HEK293 (cell line): ENCODE measurements at regions of chr6 and their contacts with region 1.

Region 1: GRCh38 chr6:116531675-116532570 is 13.6 kb downstream of the TRAPPC3L start:
- H3K4me3 ChIP-seq: no peak overlapping the region
- H3K27ac ChIP-seq: no peak overlapping the region
- H3K4me1 ChIP-seq: peaks cover 28% of the 10 kb centered on the region
- CTCF ChIP-seq: 0 out of 2 replicates have a peak, but pooled peaks have one; percentile 36

Region 2: DNA sequence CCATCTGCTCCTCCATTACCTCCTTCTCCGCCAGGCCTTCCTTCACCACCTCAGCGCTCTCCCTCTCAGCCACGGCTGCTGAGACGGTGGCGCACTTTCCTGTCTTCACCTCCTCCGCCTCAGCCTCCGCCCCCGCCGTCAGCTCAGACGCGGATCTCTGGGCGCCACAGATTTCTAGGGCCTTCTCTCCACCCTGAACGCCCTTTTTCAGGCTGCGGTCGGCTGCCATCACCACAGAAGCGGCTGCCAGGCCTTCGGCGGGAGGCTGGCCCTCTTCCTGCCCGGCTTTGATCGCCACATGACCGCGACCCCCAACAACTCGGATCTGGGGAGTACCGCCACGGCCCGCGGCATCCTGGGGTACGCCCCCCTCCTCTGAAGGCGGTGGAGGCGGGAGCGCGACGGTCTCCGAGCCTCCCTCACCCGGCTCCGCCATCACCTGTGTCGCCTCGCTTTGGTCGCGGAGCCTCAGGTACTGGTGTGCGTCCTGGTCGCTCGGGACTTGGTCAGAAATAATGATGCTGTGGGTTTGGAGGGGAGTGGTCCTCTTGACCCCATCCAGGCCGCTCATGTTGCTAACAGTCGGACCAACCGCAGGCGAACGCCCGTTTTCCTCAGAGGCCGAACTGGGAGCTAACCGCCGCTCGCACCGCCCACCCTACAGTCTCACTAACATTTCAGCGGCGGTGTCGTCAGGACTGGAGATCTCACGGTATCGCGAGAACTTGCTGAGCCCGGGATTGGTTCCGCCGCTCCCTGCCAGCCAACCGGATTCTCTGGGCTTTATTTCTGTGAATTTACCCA is 252.5 kb before region 1 on chr6 and contains the start of gene TSPYL1:
- CTCF ChIA-PET with region 1: interaction called, 12 read pairs
- POLR2A ChIA-PET with region 1: interaction called, 6 read pairs
- H3K4me3 ChIP-seq: peak within 1 kb of the TSS; percentile 97
- H3K27ac ChIP-seq: peak within 1 kb of the TSS; percentile 94
- H3K4me1 ChIP-seq: peaks cover 4% of the 10 kb centered on the region; the same call in 1 of the 2 replicates
- CTCF ChIP-seq: peak; percentile 87

Region 3: DNA sequence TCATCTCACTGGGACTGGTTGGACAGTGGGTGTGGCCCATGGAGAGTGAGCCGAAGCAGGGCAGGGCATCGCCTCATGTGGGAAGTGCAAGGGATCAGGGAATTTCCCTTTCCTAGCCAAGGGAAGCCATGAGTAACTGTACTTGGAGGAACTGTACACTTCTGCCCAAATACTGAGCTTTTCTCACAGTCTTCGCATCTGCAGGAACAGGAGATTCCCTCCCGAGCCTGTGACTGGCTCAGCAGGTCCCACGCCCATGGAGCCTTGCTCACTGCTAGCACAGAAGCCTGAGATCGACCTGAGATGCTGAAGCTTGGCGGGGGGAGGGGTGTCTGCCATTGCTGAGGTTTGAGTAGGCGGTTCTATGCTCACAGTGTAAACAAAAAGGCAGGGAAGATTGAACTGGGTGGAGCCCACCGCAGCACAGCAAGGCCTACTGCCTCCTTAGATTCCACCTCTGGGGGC is 30.9 kb before region 1 on chr6:
- CTCF ChIA-PET with region 1: interaction called, 33 read pairs
- POLR2A ChIA-PET with region 1: interaction called, 3 read pairs
- H3K4me3 ChIP-seq: peak overlapping the region; percentile 25
- H3K27ac ChIP-seq: no peak overlapping the region; the same call in 1 of the 2 replicates
- H3K4me1 ChIP-seq: no peaks in the 10 kb centered on the region; the same call in 1 of the 2 replicates
- CTCF ChIP-seq: no peak

Region 4: GRCh38 chr6:116542426-116542825 is 10.5 kb after region 1 on chr6:
- CTCF ChIA-PET with region 1: interaction called, 13 read pairs
- POLR2A ChIA-PET with region 1: no interaction called
- H3K4me3 ChIP-seq: no peak overlapping the region
- H3K27ac ChIP-seq: no peak overlapping the region
- H3K4me1 ChIP-seq: no peaks in the 10 kb centered on the region
- CTCF ChIP-seq: no peak

Region 5: DNA sequence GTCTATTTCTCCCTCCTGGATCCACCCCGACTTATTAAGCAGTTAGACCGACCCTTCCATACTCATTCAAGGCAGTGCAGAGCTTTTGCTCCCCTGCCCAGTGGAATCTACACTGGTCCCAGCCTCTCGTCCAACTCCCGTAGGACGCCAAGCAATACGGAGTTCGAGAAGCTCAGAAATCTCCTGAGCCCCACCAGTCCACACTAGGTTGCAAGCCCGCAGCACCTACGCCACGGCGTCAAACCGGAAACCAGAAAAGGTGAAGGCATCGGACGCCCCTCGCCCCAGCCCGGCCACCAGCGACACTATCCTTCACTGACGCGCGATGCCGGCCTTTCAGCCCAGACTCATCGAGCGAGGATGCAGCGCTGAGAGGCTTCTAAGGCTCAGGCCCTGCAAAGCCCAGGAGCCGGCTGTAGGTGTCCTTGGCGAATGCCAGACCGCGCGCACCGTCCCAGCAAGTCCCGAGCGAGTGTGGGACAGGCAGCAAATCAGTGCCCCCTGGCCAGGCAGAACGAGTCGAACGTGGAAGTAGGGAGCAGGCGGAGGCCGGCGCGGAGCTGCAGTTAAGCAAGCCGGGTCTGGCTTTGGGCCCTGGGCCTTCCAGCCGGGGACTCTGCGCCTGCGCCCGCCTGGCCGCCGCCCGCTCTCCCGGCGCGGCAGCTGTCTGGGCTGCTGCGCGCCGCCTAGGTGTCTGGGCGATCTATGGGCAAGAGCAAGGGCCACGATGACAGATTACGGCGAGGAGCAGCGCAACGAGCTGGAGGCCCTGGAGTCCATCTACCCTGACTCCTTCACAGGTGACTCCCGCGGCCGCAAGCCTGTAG is 39.1 kb after region 1 on chr6 and contains the start of gene RWDD1:
- CTCF ChIA-PET with region 1: interaction called, 14 read pairs
- POLR2A ChIA-PET with region 1: interaction called, 4 read pairs
- H3K4me3 ChIP-seq: peak within 1 kb of the TSS; percentile 96
- H3K27ac ChIP-seq: peak within 1 kb of the TSS; percentile 85
- H3K4me1 ChIP-seq: peaks cover 2% of the 10 kb centered on the region; the same call in 1 of the 2 replicates
- CTCF ChIP-seq: peak; percentile 40; the same call in 1 of the 2 replicates

Region 6: GRCh38 chr6:116624036-116624805 is 92.3 kb after region 1 on chr6:
- CTCF ChIA-PET with region 1: no interaction called
- POLR2A ChIA-PET with region 1: no interaction called
- H3K4me3 ChIP-seq: no peak overlapping the region
- H3K27ac ChIP-seq: no peak overlapping the region
- H3K4me1 ChIP-seq: no peaks in the 10 kb centered on the region
- CTCF ChIP-seq: no peak

Region 7: GRCh38 chr6:116676021-116676420 is 144.1 kb after region 1 on chr6:
- CTCF ChIA-PET with region 1: no interaction called
- POLR2A ChIA-PET with region 1: no interaction called
- H3K4me3 ChIP-seq: no peak overlapping the region
- H3K27ac ChIP-seq: no peak overlapping the region
- H3K4me1 ChIP-seq: no peaks in the 10 kb centered on the region
- CTCF ChIP-seq: no peak

Region 8: GRCh38 chr6:116954938-116955337 is 423.0 kb after region 1 on chr6:
- CTCF ChIA-PET with region 1: no interaction called
- POLR2A ChIA-PET with region 1: no interaction called
- H3K4me3 ChIP-seq: no peak overlapping the region
- H3K27ac ChIP-seq: no peak overlapping the region
- H3K4me1 ChIP-seq: peaks cover 10% of the 10 kb centered on the region
- CTCF ChIP-seq: no peak